ENCODE measurements at regions of chr18 and their contacts with region 1.

Region 1: GRCh38 chr18:12391618-12392165 is 14.7 kb upstream of the AFG3L2 start:
- DNase-seq: no peak
- H3K4me3 ChIP-seq: no peak overlapping the region
- H3K27ac ChIP-seq: no peak overlapping the region
- H3K4me1 ChIP-seq: no peaks in the 10 kb centered on the region; a peak in 1 of 7 replicates
- H3K27me3 ChIP-seq: no peaks in the 10 kb centered on the region
- CTCF ChIP-seq: peak; percentile 73 to 88 (median 79)
- EP300 ChIP-seq: no peak
- POLR2A ChIP-seq: no peak
- RAD21 ChIP-seq: peak; percentile 94 to 97

Region 2: DNA sequence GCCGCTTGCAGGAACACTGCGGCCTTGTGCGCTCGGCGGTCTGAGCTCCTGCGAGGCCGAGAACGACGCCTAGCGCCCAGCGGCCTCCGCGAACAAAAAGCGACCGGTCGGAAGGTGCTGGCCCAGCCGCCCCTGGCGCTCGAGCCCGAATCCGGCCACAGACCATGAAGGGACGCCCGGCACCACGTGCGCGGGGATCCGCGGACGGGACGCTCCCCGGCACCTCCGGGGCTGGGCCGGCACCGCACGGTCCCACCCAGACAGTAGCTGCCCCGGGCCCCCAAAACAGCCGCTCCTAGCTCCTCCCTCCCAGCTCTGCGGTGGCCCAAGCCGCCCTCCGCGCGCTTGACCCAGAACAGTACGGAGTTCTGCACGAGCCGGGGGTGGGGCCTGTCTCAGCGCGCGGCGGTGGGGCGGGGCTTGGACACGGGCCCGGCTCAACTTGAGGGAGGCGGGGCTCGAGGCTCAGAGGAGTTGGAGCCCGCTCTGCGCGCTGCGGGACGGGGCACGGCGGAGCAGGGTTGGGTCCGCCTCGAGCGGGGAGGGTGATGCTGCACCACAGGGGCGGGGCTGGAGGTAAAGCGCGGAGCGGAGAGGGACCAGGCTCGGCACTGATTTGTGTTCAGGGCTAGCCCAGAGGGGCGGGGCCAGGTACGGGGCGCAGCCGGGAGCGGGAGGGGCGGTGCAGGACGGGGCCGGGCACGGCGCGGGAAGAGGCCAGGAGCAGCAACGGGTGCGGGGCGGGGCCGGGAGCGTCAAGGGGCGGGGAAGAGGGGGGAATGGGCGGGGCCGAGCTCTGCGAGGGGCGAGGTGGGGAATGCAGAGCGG is 410.9 kb before region 1 on chr18:
- CTCF ChIA-PET with region 1: no interaction called
- POLR2A ChIA-PET with region 1: no interaction called
- DNase-seq: peak; percentile 98 to 99
- H3K4me3 ChIP-seq: peak overlapping the region; percentile 40 to 83 (median 63)
- H3K27ac ChIP-seq: peak overlapping the region; percentile 94
- H3K4me1 ChIP-seq: peaks cover 7 to 15% (median 9%) of the 10 kb centered on the region in 4 experiments
- H3K27me3 ChIP-seq: no peaks in the 10 kb centered on the region
- CTCF ChIP-seq: peak in 1 of 3 experiments; percentile 13; a peak in 1 of 4 replicates
- EP300 ChIP-seq: no peak
- POLR2A ChIP-seq: peak; percentile 79 to 86
- RAD21 ChIP-seq: peak; percentile 12; a peak in 2 of 4 replicates

Region 3: DNA sequence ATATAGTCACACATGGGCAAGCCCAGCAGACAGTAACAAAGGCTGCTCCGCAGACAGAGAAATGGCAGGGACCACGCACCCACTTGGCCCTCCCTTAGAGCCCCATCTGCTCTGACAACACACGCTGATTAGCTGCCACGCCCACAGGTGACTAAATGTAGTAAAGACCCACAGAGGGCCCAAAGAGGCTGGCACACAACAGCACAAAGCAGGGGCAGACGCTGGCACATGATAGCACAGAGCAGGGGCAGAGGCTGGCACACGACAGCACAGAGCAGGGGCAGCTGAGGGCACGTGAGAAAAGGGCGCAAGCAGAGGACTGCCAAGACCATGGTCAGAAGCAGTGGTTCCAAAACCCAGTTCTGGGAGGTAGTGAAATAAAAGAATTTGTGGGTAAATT is 25.3 kb before region 1 on chr18:
- CTCF ChIA-PET with region 1: no interaction called
- POLR2A ChIA-PET with region 1: no interaction called
- DNase-seq: no peak
- H3K4me3 ChIP-seq: no peak overlapping the region
- H3K27ac ChIP-seq: no peak overlapping the region
- H3K4me1 ChIP-seq: no peaks in the 10 kb centered on the region
- H3K27me3 ChIP-seq: no peaks in the 10 kb centered on the region
- CTCF ChIP-seq: no peak
- EP300 ChIP-seq: no peak
- POLR2A ChIP-seq: no peak
- RAD21 ChIP-seq: no peak

Region 4: DNA sequence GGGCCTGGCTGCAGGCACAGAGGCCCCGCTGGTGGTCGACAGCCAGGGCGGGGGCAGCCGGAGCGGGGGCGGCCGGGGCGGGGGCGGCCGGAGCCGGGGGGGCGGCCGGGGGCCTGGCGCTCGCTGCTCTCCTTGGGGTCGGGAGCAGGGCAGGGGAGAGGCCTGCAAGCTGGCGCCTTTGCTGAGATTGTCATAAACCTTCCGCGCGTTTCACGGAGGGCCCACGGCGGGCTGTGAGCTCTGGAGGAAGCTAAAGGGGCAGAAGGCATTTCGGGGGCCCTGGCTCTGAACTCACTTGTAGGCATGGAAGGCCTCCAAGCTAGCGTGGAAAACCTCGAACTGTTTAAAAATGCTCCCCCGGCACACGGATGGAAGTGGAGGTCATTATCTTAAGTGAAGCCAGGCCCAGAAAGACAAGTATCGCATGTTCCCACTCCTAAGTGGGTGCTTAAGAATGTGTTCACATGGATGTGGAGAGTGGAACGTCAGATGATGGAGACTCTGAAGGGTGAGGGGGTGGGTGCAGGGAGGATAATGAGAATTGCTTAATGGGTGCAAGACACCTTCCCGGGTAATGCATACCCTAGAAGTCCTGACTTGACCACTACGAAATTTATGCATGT is 16.7 kb after region 1 on chr18:
- CTCF ChIA-PET with region 1: interaction called, 55 read pairs
- POLR2A ChIA-PET with region 1: interaction called, 7 read pairs
- DNase-seq: no peak
- H3K4me3 ChIP-seq: peak overlapping the region; percentile 44 to 75 (median 56)
- H3K27ac ChIP-seq: no peak overlapping the region
- H3K4me1 ChIP-seq: peaks cover 0 to 8% (median 2%) of the 10 kb centered on the region in 4 experiments; a peak in 5 of 7 replicates
- H3K27me3 ChIP-seq: peaks cover 0 to 18% (median 15%) of the 10 kb centered on the region in 4 experiments; a peak in 6 of 7 replicates
- CTCF ChIP-seq: no peak
- EP300 ChIP-seq: no peak
- POLR2A ChIP-seq: no peak
- RAD21 ChIP-seq: no peak

Region 5: DNA sequence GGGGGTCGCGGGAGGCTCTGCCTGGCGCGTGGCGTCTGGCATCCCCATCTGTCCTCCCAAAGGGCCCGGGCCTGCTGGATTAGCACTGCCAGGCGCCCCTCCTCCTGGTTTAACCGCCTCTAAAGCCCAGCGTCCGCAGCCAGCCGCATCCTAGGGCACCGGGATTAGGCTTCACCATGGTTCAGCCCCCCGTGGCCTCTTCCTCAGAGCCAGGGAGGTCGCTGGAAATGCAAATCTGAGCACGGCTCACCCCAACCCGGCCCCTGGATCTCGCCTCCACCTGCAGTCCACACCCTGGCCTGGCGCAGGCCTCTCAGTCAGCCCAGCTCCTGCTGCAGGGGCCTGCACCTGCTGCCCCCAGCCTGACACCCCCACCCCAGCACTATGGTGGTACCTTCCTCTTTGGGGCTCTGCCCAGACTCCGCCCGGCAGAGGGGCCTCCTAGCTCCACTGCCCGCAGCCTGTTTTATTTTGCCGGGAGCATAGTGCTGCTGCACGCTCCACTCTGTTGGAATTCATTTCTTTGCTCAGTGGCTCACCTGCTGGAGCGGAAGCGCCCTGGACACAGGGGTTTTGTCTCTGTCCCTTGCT is 29.2 kb after region 1 on chr18:
- CTCF ChIA-PET with region 1: interaction called, 40 read pairs
- POLR2A ChIA-PET with region 1: interaction called, 8 read pairs
- DNase-seq: peak in 1 of 2 experiments; percentile 83
- H3K4me3 ChIP-seq: peak overlapping the region; percentile 42 to 64 (median 55); a peak in 7 of 8 replicates
- H3K27ac ChIP-seq: peak overlapping the region; percentile 67; the same call in 1 of the 2 replicates
- H3K4me1 ChIP-seq: peaks cover 0 to 12% (median 6%) of the 10 kb centered on the region in 4 experiments; a peak in 6 of 7 replicates
- H3K27me3 ChIP-seq: no peaks in the 10 kb centered on the region
- CTCF ChIP-seq: peak in 1 of 3 experiments; percentile 0; a peak in 2 of 4 replicates
- EP300 ChIP-seq: peak in 1 of 2 experiments; percentile 94; a peak in 2 of 3 replicates
- POLR2A ChIP-seq: peak in 1 of 2 experiments; percentile 72; a peak in 2 of 3 replicates
- RAD21 ChIP-seq: 0 out of 4 replicates have a peak, but pooled peaks of 1 of the 2 experiments have one; percentile 10

Region 6: DNA sequence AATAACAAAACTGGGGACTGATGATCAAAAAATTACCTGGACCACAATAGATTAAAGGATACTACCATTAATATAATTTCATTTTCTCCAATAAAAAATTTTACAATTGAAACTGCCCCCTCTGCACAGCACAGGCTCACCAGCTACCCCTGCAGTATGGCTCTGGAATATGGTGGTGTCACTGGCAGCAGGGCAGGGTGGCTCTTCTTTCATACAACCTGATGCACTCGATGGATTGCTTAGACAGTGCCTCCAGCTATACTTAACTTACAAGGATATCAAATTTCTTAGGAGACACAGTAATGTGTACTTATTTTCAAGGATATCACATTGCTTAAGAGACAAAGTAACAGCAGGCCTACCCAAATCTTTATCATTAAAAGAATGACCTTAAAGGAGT is 140.1 kb after region 1 on chr18:
- CTCF ChIA-PET with region 1: interaction called, 11 read pairs
- POLR2A ChIA-PET with region 1: no interaction called
- DNase-seq: no peak
- H3K4me3 ChIP-seq: no peak overlapping the region
- H3K27ac ChIP-seq: no peak overlapping the region
- H3K4me1 ChIP-seq: no peaks in the 10 kb centered on the region
- H3K27me3 ChIP-seq: no peaks in the 10 kb centered on the region
- CTCF ChIP-seq: peak in 2 of 3 experiments; percentile 19 to 26; a peak in 2 of 4 replicates
- EP300 ChIP-seq: no peak
- POLR2A ChIP-seq: no peak
- RAD21 ChIP-seq: peak; percentile 12 to 37; a peak in 2 of 4 replicates

Region 7: GRCh38 chr18:12657684-12658425 is 266.2 kb after region 1 on chr18 and contains the start of gene SPIRE1:
- CTCF ChIA-PET with region 1: interaction called, 139 read pairs
- POLR2A ChIA-PET with region 1: interaction called, 3 read pairs
- DNase-seq: peak in 1 of 2 experiments; percentile 79
- H3K4me3 ChIP-seq: peak within 1 kb of the TSS; percentile 61 to 90 (median 74)
- H3K27ac ChIP-seq: no peak within 1 kb of the TSS; the same call in 1 of the 2 replicates
- H3K4me1 ChIP-seq: peaks cover 0 to 3% (median 1%) of the 10 kb centered on the region in 4 experiments; a peak in 3 of 7 replicates
- H3K27me3 ChIP-seq: peaks cover 0 to 12% (median 5%) of the 10 kb centered on the region in 4 experiments; a peak in 5 of 7 replicates
- CTCF ChIP-seq: no peak
- EP300 ChIP-seq: no peak
- POLR2A ChIP-seq: peak in 1 of 2 experiments; percentile 64; a peak in 1 of 3 replicates
- RAD21 ChIP-seq: no peak
- total RNA-seq, gene SPIRE1: 19.0 and 21.5 TPM in 2 replicates